K562 (cell line): ENCODE measurements at regions of chr13 and their contacts with region 1.

Region 1: DNA sequence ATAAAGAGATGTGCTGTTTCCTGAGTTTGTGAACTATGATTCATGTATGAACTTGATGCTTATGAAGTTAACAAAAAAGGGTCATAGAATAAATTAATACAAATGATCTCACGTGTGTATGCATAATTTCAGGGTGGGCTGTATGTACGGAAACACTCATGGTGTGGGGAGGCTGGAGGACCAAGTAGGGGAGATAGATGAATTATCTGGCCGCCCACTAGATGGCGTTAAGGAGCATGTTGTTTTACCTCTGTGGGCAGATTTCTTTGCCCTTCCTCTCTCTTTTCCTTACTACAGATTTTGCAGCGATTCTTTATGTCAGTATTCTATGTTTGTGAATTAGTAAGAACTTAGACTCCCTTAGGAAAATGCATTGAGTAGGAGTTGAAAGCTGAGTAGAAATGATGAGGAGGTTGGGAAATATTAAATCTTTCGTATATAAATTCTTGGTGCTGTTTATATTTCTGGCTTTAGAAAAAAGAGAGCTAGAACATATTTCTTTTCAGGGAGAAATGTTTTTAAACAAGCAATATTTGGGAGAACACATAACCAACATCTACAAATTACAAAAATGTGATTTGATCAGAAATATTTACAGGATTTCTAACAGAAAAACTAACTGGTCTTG is 47.4 kb upstream of the TMTC4 start:
- DNase-seq: peak; percentile 40 to 54 (median 41)
- ATAC-seq: peak; percentile 85
- H3K4me3 ChIP-seq: no peak overlapping the region
- H3K27ac ChIP-seq: no peak overlapping the region
- H3K4me1 ChIP-seq: no peaks in the 10 kb centered on the region
- H3K27me3 ChIP-seq: no peaks in the 10 kb centered on the region
- CTCF ChIP-seq: peak; percentile 56 to 63 (median 62)
- EP300 ChIP-seq: no peak
- POLR2A ChIP-seq: no peak
- RAD21 ChIP-seq: peak in 1 of 2 experiments; percentile 38; a peak in 2 of 4 replicates

Region 2: DNA sequence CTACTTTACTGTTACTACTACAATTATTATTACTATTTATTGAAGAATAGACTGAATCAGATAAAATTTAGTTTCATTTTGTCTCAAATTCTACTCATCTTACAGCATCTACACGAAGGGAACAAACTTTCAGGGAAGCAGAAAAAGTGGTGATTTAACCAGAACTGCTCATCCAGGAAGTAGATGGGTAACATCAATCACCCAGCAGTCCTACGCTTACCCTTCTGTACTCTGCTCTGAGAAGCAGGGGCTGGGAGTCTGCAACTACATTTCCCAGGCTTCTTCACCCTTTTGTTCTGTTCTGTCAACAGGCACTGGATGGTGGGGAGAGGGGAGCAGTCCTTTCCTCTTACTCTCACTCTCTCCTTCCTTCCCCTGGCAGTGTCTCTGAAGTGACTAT is 102.1 kb before region 1 on chr13:
- CTCF ChIA-PET with region 1: no interaction called
- POLR2A ChIA-PET with region 1: no interaction called
- in situ Hi-C with region 1: no loop called
- intact Hi-C with region 1: no loop called
- DNase-seq: no peak
- ATAC-seq: no peak
- H3K4me3 ChIP-seq: no peak overlapping the region
- H3K27ac ChIP-seq: no peak overlapping the region
- H3K4me1 ChIP-seq: no peaks in the 10 kb centered on the region
- H3K27me3 ChIP-seq: no peaks in the 10 kb centered on the region
- CTCF ChIP-seq: no peak
- EP300 ChIP-seq: no peak
- POLR2A ChIP-seq: no peak
- RAD21 ChIP-seq: no peak

Region 3: DNA sequence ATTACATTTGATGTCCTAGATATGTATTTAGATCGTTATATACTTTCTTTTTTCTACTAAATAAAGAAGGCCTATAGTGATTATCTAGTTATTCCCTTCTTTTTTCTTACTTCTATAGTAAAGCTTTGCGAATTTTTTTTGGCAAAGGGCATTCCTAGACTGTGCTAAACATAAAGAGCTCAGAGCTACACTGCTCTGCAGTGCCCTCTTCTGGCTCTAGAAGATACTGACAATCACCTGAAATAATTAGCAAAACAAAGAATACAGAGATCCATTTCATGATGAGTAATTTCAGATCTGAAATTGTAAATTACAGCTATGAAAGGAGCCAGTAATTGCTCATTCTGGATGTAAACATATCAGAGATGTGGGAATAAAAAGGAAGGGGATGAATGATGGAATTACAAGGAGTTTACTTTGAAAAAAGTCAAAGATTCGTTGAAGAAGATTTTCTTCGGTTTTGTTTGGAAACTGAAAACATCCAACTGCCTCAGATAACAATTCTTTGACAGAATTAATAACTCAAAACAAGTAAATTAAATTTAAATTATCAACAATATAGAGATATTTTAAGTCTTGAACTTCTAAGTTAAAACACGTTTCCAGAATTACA is 405.8 kb after region 1 on chr13:
- CTCF ChIA-PET with region 1: no interaction called
- POLR2A ChIA-PET with region 1: no interaction called
- in situ Hi-C with region 1: no loop called
- intact Hi-C with region 1: loop called (anchors 10 kb)
- DNase-seq: peak; percentile 14 to 37 (median 24)
- ATAC-seq: peak; percentile 79
- H3K4me3 ChIP-seq: no peak overlapping the region
- H3K27ac ChIP-seq: no peak overlapping the region
- H3K4me1 ChIP-seq: no peaks in the 10 kb centered on the region
- H3K27me3 ChIP-seq: no peaks in the 10 kb centered on the region
- CTCF ChIP-seq: peak; percentile 21 to 61 (median 46); a peak in 4 of 6 replicates
- EP300 ChIP-seq: no peak
- POLR2A ChIP-seq: no peak
- RAD21 ChIP-seq: peak; percentile 44 to 63; a peak in 3 of 4 replicates